ENCODE measurements at regions of chr6 and their contacts with region 1.

Region 1: GRCh38 chr6:144607998-144608735 is 323.0 kb downstream of the UTRN start:
- DNase-seq: no peak
- ATAC-seq: no peak
- H3K4me3 ChIP-seq: no peak overlapping the region
- H3K4me3 Mint-ChIP-seq: no peak overlapping the region
- H3K27ac ChIP-seq: no peak overlapping the region
- H3K27ac Mint-ChIP-seq: no peak overlapping the region
- H3K4me1 ChIP-seq: peaks cover 0 to 3% of the 10 kb centered on the region in 2 donors
- H3K4me1 Mint-ChIP-seq: peaks cover 2% of the 10 kb centered on the region
- H3K27me3 ChIP-seq: no peaks in the 10 kb centered on the region
- H3K27me3 Mint-ChIP-seq: no peaks in the 10 kb centered on the region
- CTCF ChIP-seq: no peak

Region 2: DNA sequence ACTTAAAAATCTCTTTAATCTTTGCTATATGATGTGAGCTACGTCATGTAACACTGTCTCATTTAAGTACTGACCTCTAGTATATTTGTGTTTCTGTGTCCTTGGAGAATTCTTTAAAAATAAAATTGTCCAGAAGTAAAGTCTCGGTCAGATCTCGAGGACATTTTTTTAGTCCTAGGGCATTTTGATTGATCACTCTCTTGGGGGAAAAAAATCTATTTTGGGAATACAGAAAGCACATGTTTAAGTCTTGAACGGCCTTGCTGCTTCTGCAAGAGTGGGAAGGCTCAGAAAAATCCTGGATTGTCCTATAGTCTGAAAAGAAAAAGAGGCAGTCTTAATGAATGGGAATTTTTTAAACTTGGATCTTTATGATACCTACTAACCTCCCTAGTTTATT is 88.7 kb before region 1 on chr6:
- CTCF ChIA-PET with region 1: no interaction called
- POLR2A ChIA-PET with region 1: no interaction called
- intact Hi-C with region 1: no loop called
- DNase-seq: no peak
- ATAC-seq: no peak
- H3K4me3 ChIP-seq: no peak overlapping the region
- H3K4me3 Mint-ChIP-seq: no peak overlapping the region
- H3K27ac ChIP-seq: no peak overlapping the region
- H3K27ac Mint-ChIP-seq: no peak overlapping the region
- H3K4me1 ChIP-seq: no peaks in the 10 kb centered on the region
- H3K4me1 Mint-ChIP-seq: no peaks in the 10 kb centered on the region
- H3K27me3 ChIP-seq: no peaks in the 10 kb centered on the region
- H3K27me3 Mint-ChIP-seq: no peaks in the 10 kb centered on the region
- CTCF ChIP-seq: no peak

Region 3: GRCh38 chr6:144647971-144648651 is 39.9 kb after region 1 on chr6:
- CTCF ChIA-PET with region 1: no interaction called
- POLR2A ChIA-PET with region 1: no interaction called
- intact Hi-C with region 1: loop called (anchors 5 kb)
- DNase-seq: no peak
- ATAC-seq: no peak
- H3K4me3 ChIP-seq: no peak overlapping the region
- H3K4me3 Mint-ChIP-seq: no peak overlapping the region
- H3K27ac ChIP-seq: peak overlapping the region in 1 of 2 donors; percentile 48
- H3K27ac Mint-ChIP-seq: peak overlapping the region; percentile 28
- H3K4me1 ChIP-seq: peaks cover 0 to 3% of the 10 kb centered on the region in 2 donors
- H3K4me1 Mint-ChIP-seq: peaks cover 24% of the 10 kb centered on the region
- H3K27me3 ChIP-seq: no peaks in the 10 kb centered on the region
- H3K27me3 Mint-ChIP-seq: no peaks in the 10 kb centered on the region
- CTCF ChIP-seq: no peak

Measured in B cell (primary cell).